HepG2 (cell line): ENCODE measurements at regions of chr9 and their contacts with region 1.

Region 1: GRCh38 chr9:70589571-70590314 is 175.3 kb upstream of the KLF9 start:
- DNase-seq: no peak
- ATAC-seq: no peak
- H3K4me3 ChIP-seq: no peak overlapping the region
- H3K27ac ChIP-seq: no peak overlapping the region
- H3K4me1 ChIP-seq: no peaks in the 10 kb centered on the region
- H3K27me3 ChIP-seq: no peaks in the 10 kb centered on the region
- CTCF ChIP-seq: no peak
- EP300 ChIP-seq: no peak
- POLR2A ChIP-seq: no peak
- RAD21 ChIP-seq: no peak

Region 2: GRCh38 chr9:70510157-70510770 is 79.5 kb before region 1 on chr9:
- CTCF ChIA-PET with region 1: no interaction called
- POLR2A ChIA-PET with region 1: no interaction called
- in situ Hi-C with region 1: no loop called
- intact Hi-C with region 1: loop called (anchors 5 kb)
- DNase-seq: peak; percentile 12
- ATAC-seq: peak; percentile 71
- H3K4me3 ChIP-seq: no peak overlapping the region
- H3K27ac ChIP-seq: no peak overlapping the region
- H3K4me1 ChIP-seq: no peaks in the 10 kb centered on the region
- H3K27me3 ChIP-seq: no peaks in the 10 kb centered on the region
- CTCF ChIP-seq: peak; percentile 51
- EP300 ChIP-seq: no peak
- POLR2A ChIP-seq: no peak
- RAD21 ChIP-seq: no peak